Activated CD8-positive, alpha-beta T cell treated with anti-CD3 and anti-CD28 coated beads for 36 hours (primary cell): ENCODE measurements at regions of chr1 and their contacts with region 1.

Region 1: GRCh38 chr1:205172729-205173366 is 38.7 kb downstream of the DSTYK start:
- DNase-seq: no peak
- ATAC-seq: peak; percentile 75
- H3K4me3 Mint-ChIP-seq: no peak overlapping the region
- H3K27ac Mint-ChIP-seq: peak overlapping the region; percentile 69
- H3K4me1 Mint-ChIP-seq: peaks cover 35% of the 10 kb centered on the region
- H3K27me3 Mint-ChIP-seq: no peaks in the 10 kb centered on the region
- CTCF ChIP-seq: no peak

Region 2: DNA sequence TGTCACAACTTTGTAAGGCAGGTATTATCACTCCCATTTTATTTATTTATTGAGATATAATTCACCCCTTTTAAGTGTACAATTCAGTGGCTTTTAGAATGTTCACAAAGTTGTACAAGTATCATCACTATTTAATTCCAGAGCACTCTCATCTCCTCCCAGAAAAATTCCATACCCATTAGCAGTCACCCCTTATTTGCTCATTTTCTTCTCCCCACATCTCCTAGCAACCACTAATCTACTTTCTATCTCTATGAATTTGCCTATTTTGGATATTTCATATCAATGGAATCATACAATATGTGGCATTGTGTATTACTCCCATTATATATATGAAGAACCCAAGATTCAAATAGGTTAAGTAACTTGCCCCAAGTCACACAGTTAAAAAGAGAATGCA is 31.7 kb after region 1 on chr1:
- CTCF ChIA-PET with region 1: no interaction called
- POLR2A ChIA-PET with region 1: interaction called, 5 read pairs
- intact Hi-C with region 1: loop called (anchors 5 kb)
- DNase-seq: no peak
- ATAC-seq: no peak
- H3K4me3 Mint-ChIP-seq: peak overlapping the region; percentile 18
- H3K27ac Mint-ChIP-seq: peak overlapping the region; percentile 98
- H3K4me1 Mint-ChIP-seq: peaks cover 73% of the 10 kb centered on the region
- H3K27me3 Mint-ChIP-seq: no peaks in the 10 kb centered on the region
- CTCF ChIP-seq: no peak